B cell (primary cell): ENCODE measurements at regions of chr1 and their contacts with region 1.

Region 1: GRCh38 chr1:248858891-248859889 is at the start of gene ZNF692:
- DNase-seq: peak; percentile 98
- ATAC-seq: peak; percentile 86
- H3K4me3 ChIP-seq: peak within 1 kb of the TSS; percentile 60 to 85 (median 71)
- H3K4me3 Mint-ChIP-seq: peak within 1 kb of the TSS; percentile 95
- H3K27ac ChIP-seq: peak within 1 kb of the TSS; percentile 91 to 92
- H3K27ac Mint-ChIP-seq: peak within 1 kb of the TSS; percentile 98
- H3K4me1 ChIP-seq: peaks cover 26 to 43% of the 10 kb centered on the region in 2 donors
- H3K4me1 Mint-ChIP-seq: peaks cover 58% of the 10 kb centered on the region
- H3K27me3 ChIP-seq: no peaks in the 10 kb centered on the region
- H3K27me3 Mint-ChIP-seq: no peaks in the 10 kb centered on the region
- CTCF ChIP-seq: no peak
- total RNA-seq, gene ZNF692: 53.1 and 56.9 TPM in 2 replicates

Region 2: DNA sequence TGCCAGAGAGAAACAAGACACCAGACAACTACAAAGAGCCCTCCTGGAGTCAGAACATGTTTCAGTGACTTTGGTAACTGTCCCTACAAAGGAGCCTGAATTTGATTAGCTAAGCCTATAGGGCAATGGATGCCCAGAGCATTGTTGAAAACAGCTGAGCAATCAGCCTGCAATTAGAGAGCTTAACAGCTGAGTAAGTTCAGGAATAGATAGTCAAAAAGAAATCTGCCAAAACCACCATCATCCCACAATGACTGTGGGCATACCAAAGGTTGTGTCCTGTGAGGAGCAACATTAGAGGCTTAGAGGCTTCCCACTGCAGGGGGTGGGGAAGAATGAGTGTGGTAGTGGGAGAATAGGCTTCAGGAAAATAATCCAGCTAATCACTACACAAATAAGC is 65.6 kb before region 1 on chr1:
- CTCF ChIA-PET with region 1: interaction called, 4 read pairs
- POLR2A ChIA-PET with region 1: interaction called, 13 read pairs
- intact Hi-C with region 1: no loop called
- DNase-seq: no peak
- ATAC-seq: no peak
- H3K4me3 ChIP-seq: no peak overlapping the region
- H3K4me3 Mint-ChIP-seq: no peak overlapping the region
- H3K27ac ChIP-seq: peak overlapping the region; percentile 85 to 90
- H3K27ac Mint-ChIP-seq: peak overlapping the region; percentile 97
- H3K4me1 ChIP-seq: peaks cover 48 to 55% of the 10 kb centered on the region in 2 donors
- H3K4me1 Mint-ChIP-seq: peaks cover 54% of the 10 kb centered on the region
- H3K27me3 ChIP-seq: no peaks in the 10 kb centered on the region
- H3K27me3 Mint-ChIP-seq: no peaks in the 10 kb centered on the region
- CTCF ChIP-seq: no peak

Region 3: GRCh38 chr1:248825909-248826760 is 33.1 kb before region 1 on chr1 and contains the start of gene SH3BP5L:
- CTCF ChIA-PET with region 1: interaction called, 36 read pairs
- POLR2A ChIA-PET with region 1: interaction called, 12 read pairs
- intact Hi-C with region 1: loop called (anchors 1 kb)
- DNase-seq: peak; percentile 98
- ATAC-seq: peak; percentile 84
- H3K4me3 ChIP-seq: peak within 1 kb of the TSS; percentile 86 to 99 (median 93)
- H3K4me3 Mint-ChIP-seq: peak within 1 kb of the TSS; percentile 95
- H3K27ac ChIP-seq: peak within 1 kb of the TSS; percentile 98
- H3K27ac Mint-ChIP-seq: peak within 1 kb of the TSS; percentile 96
- H3K4me1 ChIP-seq: peaks cover 52 to 54% of the 10 kb centered on the region in 2 donors
- H3K4me1 Mint-ChIP-seq: peaks cover 57% of the 10 kb centered on the region
- H3K27me3 ChIP-seq: no peaks in the 10 kb centered on the region
- H3K27me3 Mint-ChIP-seq: no peaks in the 10 kb centered on the region
- CTCF ChIP-seq: peak; percentile 84
- total RNA-seq, gene SH3BP5L: 35.7 and 36.5 TPM in 2 replicates

Region 4: GRCh38 chr1:248837794-248838356 is 21.3 kb before region 1 on chr1 and contains the start of gene ZNF672:
- CTCF ChIA-PET with region 1: interaction called, 64 read pairs
- POLR2A ChIA-PET with region 1: interaction called, 88 read pairs
- intact Hi-C with region 1: loop called (anchors 1 kb)
- DNase-seq: peak; percentile 94
- ATAC-seq: peak; percentile 82
- H3K4me3 ChIP-seq: peak within 1 kb of the TSS; percentile 65 to 94 (median 92)
- H3K4me3 Mint-ChIP-seq: no peak within 1 kb of the TSS
- H3K27ac ChIP-seq: peak within 1 kb of the TSS; percentile 97 to 99
- H3K27ac Mint-ChIP-seq: no peak within 1 kb of the TSS
- H3K4me1 ChIP-seq: peaks cover 42 to 47% of the 10 kb centered on the region in 2 donors
- H3K4me1 Mint-ChIP-seq: peaks cover 36% of the 10 kb centered on the region
- H3K27me3 ChIP-seq: no peaks in the 10 kb centered on the region
- H3K27me3 Mint-ChIP-seq: no peaks in the 10 kb centered on the region
- CTCF ChIP-seq: no peak
- total RNA-seq, gene ZNF672: 56.3 and 62.2 TPM in 2 replicates

Region 5: DNA sequence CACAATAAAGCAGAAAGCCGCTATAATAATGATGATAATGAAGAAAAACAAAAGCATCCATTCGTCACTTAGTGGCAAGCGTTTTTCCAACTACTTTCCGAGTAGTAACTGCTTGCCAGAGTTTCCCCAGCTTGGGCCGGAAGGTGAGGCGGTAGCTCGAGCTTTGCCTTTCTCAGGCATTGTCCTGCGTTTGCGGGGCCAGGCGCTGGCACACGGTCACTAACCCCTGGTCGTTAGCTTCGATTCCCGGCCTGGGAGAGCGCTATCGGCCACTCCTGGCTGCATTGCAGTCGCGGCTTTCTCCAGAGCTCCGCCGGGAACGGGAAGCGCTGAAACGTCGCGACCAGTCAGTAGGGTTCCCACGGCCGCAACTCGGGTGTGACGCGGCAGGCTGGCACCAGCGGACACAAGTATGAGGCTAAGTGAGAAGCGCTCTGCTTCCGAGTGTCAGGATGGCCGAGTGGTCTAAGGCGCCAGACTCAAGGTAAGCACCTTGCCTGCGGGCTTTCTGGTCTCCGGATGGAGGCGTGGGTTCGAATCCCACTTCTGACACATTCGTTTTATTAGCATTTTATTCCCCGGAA is 14.3 kb after region 1 on chr1:
- CTCF ChIA-PET with region 1: interaction called, 11 read pairs
- POLR2A ChIA-PET with region 1: interaction called, 12 read pairs
- intact Hi-C with region 1: loop called (anchors 1 kb)
- DNase-seq: peak; percentile 95
- ATAC-seq: peak; percentile 80
- H3K4me3 ChIP-seq: peak overlapping the region; percentile 68 to 98 (median 84)
- H3K4me3 Mint-ChIP-seq: peak overlapping the region; percentile 95
- H3K27ac ChIP-seq: peak overlapping the region; percentile 64 to 81
- H3K27ac Mint-ChIP-seq: peak overlapping the region; percentile 97
- H3K4me1 ChIP-seq: peaks cover 0 to 23% of the 10 kb centered on the region in 2 donors
- H3K4me1 Mint-ChIP-seq: peaks cover 30% of the 10 kb centered on the region
- H3K27me3 ChIP-seq: no peaks in the 10 kb centered on the region
- H3K27me3 Mint-ChIP-seq: no peaks in the 10 kb centered on the region
- CTCF ChIP-seq: no peak

Region 6: DNA sequence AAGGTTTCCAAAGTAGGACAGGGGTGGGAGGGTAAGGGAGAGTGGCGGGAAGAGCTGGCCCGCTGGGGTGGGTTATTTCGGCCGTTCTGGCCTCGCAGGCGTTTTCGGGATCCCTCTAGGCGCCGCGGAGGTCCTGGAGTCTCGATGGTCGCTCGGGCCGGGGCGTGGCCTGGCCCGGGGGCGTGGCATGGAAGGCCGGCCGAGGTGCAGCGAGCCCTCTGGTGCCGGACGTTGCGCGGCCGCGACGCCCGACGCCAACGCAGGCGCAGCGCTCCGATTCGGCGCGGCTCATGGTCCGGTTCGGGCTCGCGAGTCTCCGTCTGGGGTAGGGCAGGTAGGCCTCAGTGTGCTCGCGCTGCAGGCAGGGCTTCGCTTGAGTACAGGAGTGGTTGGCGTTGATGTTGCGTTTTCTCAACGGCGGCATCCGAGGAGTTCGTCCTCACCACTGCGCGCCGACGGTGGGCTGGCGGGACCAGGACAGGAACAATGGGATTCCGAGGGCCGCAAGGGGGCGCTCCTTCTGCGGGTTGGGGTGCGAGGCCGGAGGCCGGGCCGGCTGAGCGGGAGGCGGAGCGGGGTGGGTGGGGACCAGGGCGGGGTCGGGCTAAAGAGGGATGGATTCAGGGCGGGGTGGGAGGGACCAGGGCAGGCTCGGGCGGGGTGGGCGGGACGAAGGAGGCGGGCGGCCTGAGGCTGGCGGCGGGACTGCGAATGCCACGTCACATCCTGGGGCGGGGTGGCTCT is 47.0 kb after region 1 on chr1 and contains the start of gene PGBD2:
- CTCF ChIA-PET with region 1: interaction called, 3 read pairs
- POLR2A ChIA-PET with region 1: interaction called, 13 read pairs
- intact Hi-C with region 1: loop called (anchors 1 kb)
- DNase-seq: peak; percentile 96
- ATAC-seq: peak; percentile 84
- H3K4me3 ChIP-seq: peak within 1 kb of the TSS; percentile 69 to 84 (median 71)
- H3K4me3 Mint-ChIP-seq: peak within 1 kb of the TSS; percentile 94
- H3K27ac ChIP-seq: peak within 1 kb of the TSS; percentile 78 to 94
- H3K27ac Mint-ChIP-seq: peak within 1 kb of the TSS; percentile 97
- H3K4me1 ChIP-seq: peaks cover 15 to 20% of the 10 kb centered on the region in 2 donors
- H3K4me1 Mint-ChIP-seq: peaks cover 47% of the 10 kb centered on the region
- H3K27me3 ChIP-seq: no peaks in the 10 kb centered on the region
- H3K27me3 Mint-ChIP-seq: no peaks in the 10 kb centered on the region
- CTCF ChIP-seq: peak; percentile 66
- total RNA-seq, gene PGBD2: 27.7 and 29.2 TPM in 2 replicates